ENCODE measurements at regions of chr5 and their contacts with region 1.

Region 1: DNA sequence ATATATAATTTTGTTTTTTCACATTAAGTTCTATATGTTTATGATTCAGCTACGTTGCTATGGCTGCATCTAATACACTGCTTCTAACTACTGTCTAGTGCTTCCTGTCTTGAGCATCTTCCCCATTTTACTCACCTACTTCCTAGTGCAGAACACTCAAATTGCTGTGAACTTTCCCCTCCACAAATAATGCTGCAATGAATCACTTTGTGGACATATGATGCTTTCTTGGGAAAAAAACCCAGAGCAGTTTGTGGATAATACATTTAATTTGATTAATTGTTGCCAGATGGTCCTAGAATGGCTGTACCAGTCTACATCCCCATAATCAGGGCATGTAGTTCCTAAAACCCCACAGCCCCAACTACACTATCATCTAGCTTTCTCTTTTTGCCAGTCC is 18.5 kb downstream of the CD180 start:
- DNase-seq: no peak
- ATAC-seq: no peak
- H3K4me3 ChIP-seq: no peak overlapping the region
- H3K27ac ChIP-seq: no peak overlapping the region
- H3K4me1 ChIP-seq: no peaks in the 10 kb centered on the region
- H3K27me3 ChIP-seq: no peaks in the 10 kb centered on the region
- CTCF ChIP-seq: no peak
- POLR2A ChIP-seq: no peak
- RAD21 ChIP-seq: no peak

Region 2: GRCh38 chr5:67165526-67166459 is 12.3 kb before region 1 on chr5:
- CTCF ChIA-PET with region 1: interaction called, 11 read pairs
- POLR2A ChIA-PET with region 1: no interaction called
- RAD21 ChIA-PET with region 1: no interaction called
- intact Hi-C with region 1: no loop called
- DNase-seq: peak; percentile 73
- ATAC-seq: peak; percentile 86
- H3K4me3 ChIP-seq: peak overlapping the region; percentile 37 to 51
- H3K27ac ChIP-seq: peak overlapping the region; percentile 65
- H3K4me1 ChIP-seq: peaks cover 10 to 22% of the 10 kb centered on the region in 2 experiments
- H3K27me3 ChIP-seq: no peaks in the 10 kb centered on the region
- CTCF ChIP-seq: peak; percentile 72 to 80 (median 77)
- POLR2A ChIP-seq: peak; percentile 59
- RAD21 ChIP-seq: peak; percentile 72

Region 3: DNA sequence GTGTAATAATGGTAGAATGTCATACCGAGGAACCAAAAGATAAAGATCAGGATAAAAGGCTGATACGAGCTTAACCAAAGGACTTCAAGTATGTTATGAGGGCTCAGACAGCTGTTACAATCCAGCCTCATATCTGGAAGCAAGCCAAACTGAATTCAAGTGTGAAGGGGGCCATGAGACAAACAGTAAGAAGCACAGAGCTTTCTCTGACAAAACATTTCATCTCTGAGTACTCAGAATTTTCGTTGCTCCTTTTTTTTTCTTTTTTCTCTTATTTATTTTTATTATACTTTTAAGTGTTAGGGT is 71.5 kb after region 1 on chr5:
- CTCF ChIA-PET with region 1: no interaction called
- POLR2A ChIA-PET with region 1: no interaction called
- RAD21 ChIA-PET with region 1: no interaction called
- intact Hi-C with region 1: no loop called
- DNase-seq: no peak
- ATAC-seq: no peak
- H3K4me3 ChIP-seq: no peak overlapping the region
- H3K27ac ChIP-seq: no peak overlapping the region
- H3K4me1 ChIP-seq: no peaks in the 10 kb centered on the region
- H3K27me3 ChIP-seq: no peaks in the 10 kb centered on the region
- CTCF ChIP-seq: no peak
- POLR2A ChIP-seq: no peak
- RAD21 ChIP-seq: no peak

Measured in HCT116 (cell line).